Heart left ventricle (tissue), 16 donors: ENCODE measurements at regions of chr10 and their contacts with region 1.

Region 1: GRCh38 chr10:117167789-117168674 is 29.3 kb upstream of the KCNK18 start:
- DNase-seq: peak; percentile 38 to 84 (median 55)
- ATAC-seq: peak; percentile 58 to 95 (median 86)
- H3K4me3 ChIP-seq: peak overlapping the region in 9 of 12 donors; percentile 0 to 28 (median 11)
- H3K27ac ChIP-seq: no peak overlapping the region
- H3K4me1 ChIP-seq: peaks cover 0 to 40% (median 20%) of the 10 kb centered on the region in 12 donors
- H3K27me3 ChIP-seq: peaks cover 70 to 100% (median 98%) of the 10 kb centered on the region in 9 donors
- CTCF ChIP-seq: peak; percentile 58 to 90 (median 77)
- POLR2A ChIP-seq: no peak

Region 2: GRCh38 chr10:116511365-116511764 is 656.7 kb before region 1 on chr10:
- intact Hi-C with region 1: no loop called
- DNase-seq: no peak
- ATAC-seq: no peak
- H3K4me3 ChIP-seq: no peak overlapping the region
- H3K27ac ChIP-seq: no peak overlapping the region
- H3K4me1 ChIP-seq: no peaks in the 10 kb centered on the region
- H3K27me3 ChIP-seq: peaks cover 0 to 6% (median 0%) of the 10 kb centered on the region in 9 donors
- CTCF ChIP-seq: no peak
- POLR2A ChIP-seq: no peak

Region 3: DNA sequence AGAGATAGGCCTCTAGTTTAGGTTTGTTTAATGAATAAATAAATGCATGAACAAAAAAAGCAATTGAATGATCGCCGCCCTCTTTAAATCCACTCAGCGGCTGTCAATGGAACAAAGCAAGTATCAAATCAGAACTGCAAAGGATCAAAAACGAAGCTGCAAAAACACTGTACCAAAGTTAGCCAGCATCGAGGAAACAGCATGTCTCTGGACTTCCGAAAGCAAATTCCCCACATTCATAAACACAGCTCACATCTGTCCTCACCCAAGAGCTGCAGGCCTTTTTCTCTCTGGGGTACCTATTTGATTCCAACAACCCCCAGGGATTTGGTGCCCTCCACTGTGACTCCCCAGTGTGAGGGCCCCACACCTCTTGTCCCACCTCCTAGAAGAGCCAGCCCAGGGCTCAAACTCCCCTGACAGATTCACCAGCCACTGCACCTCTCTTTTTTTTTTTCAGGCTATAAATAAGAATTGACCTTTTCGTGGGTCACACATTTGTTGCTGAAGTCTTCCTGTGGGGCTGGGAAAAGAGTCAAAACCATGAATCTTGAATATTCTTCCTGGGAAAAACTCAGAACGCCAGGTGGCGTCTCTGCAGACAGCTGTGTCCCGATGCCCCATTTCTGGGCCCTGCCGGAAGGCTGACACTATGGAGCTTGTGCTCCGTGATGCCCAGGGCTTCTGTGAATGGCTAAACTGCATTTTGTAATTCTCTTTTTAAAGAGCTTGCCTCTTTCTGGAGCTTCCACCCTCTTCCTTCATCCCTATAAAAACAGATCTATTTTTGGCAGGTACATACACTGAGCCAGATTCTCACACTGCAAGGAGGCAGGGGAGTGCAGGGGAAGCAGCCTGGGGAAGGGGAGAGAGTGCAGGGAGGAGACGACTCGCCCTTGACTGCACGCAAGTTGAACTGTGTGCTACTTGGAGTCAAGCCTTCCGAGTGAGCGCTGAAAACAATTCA is 477.4 kb before region 1 on chr10:
- intact Hi-C with region 1: loop called in 7 of 10 experiments (anchors 5 to 10 kb)
- DNase-seq: peak in 3 of 5 donors; percentile 54 to 63 (median 58)
- ATAC-seq: peak; percentile 46 to 66 (median 62)
- H3K4me3 ChIP-seq: peak overlapping the region in 1 of 12 donors; percentile 23
- H3K27ac ChIP-seq: peak overlapping the region in 10 of 12 donors; percentile 40 to 75 (median 52)
- H3K4me1 ChIP-seq: peaks cover 0 to 55% (median 42%) of the 10 kb centered on the region in 12 donors
- H3K27me3 ChIP-seq: no peaks in the 10 kb centered on the region
- CTCF ChIP-seq: peak in 11 of 12 donors; percentile 21 to 63 (median 38)
- POLR2A ChIP-seq: no peak

Region 4: DNA sequence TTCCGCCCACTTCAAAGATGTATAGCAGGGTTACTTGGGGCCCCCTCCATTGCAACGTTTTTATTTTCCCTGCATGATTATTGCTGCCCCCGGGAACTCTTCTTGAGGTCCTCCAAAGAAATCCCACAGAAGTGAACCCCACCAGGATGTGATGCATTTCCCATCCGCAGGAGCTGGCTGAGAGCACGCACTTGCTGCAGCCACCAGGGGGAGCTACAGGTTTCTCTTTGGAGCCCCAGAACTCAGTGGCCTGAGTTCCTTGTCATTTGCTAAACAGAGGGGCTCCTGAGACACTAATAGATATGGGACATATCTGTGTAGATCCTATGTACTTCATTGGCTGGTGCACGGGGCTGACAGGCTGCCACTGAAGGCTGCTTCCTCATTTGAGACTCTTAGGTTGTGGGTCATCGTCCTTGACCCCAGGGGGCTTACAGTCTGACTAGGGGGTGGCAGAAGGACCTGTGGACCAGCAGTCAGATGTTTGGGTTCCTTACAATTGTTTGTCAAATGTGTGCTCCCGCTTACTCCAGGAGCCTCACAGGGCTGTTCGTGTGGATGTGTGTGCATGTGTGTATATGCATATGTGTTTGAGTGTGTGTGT is 371.0 kb before region 1 on chr10:
- intact Hi-C with region 1: loop called in 4 of 10 experiments (anchors 2 kb)
- DNase-seq: peak; percentile 63 to 74 (median 72)
- ATAC-seq: peak in 3 of 4 donors; percentile 61 to 85 (median 83)
- H3K4me3 ChIP-seq: no peak overlapping the region
- H3K27ac ChIP-seq: no peak overlapping the region
- H3K4me1 ChIP-seq: no peaks in the 10 kb centered on the region
- H3K27me3 ChIP-seq: peaks cover 0 to 29% (median 0%) of the 10 kb centered on the region in 9 donors
- CTCF ChIP-seq: peak; percentile 77 to 93 (median 84)
- POLR2A ChIP-seq: no peak